CD4-positive, alpha-beta T cell (primary cell): ENCODE measurements at regions of chr10 and their contacts with region 1.

Region 1: GRCh38 chr10:62996925-62997324 is 136.2 kb upstream of the NRBF2 start:
- DNase-seq: no peak
- ATAC-seq: no peak
- H3K4me3 ChIP-seq: no peak overlapping the region
- H3K4me3 Mint-ChIP-seq: no peak overlapping the region
- H3K27ac ChIP-seq: no peak overlapping the region
- H3K27ac Mint-ChIP-seq: no peak overlapping the region
- H3K4me1 ChIP-seq: no peaks in the 10 kb centered on the region
- H3K4me1 Mint-ChIP-seq: peaks cover 5% of the 10 kb centered on the region
- H3K27me3 ChIP-seq: peaks cover 0 to 3% of the 10 kb centered on the region in 2 experiments
- H3K27me3 Mint-ChIP-seq: peaks cover 29% of the 10 kb centered on the region
- CTCF ChIP-seq: no peak

Region 2: GRCh38 chr10:62577666-62578291 is 419.1 kb before region 1 on chr10:
- CTCF ChIA-PET with region 1: no interaction called
- POLR2A ChIA-PET with region 1: no interaction called
- intact Hi-C with region 1: loop called in 1 of 2 experiments (anchors 5 kb)
- DNase-seq: no peak
- ATAC-seq: no peak
- H3K4me3 ChIP-seq: no peak overlapping the region
- H3K4me3 Mint-ChIP-seq: no peak overlapping the region
- H3K27ac ChIP-seq: no peak overlapping the region
- H3K27ac Mint-ChIP-seq: no peak overlapping the region
- H3K4me1 ChIP-seq: no peaks in the 10 kb centered on the region
- H3K4me1 Mint-ChIP-seq: no peaks in the 10 kb centered on the region
- H3K27me3 ChIP-seq: no peaks in the 10 kb centered on the region
- H3K27me3 Mint-ChIP-seq: peaks cover 5% of the 10 kb centered on the region
- CTCF ChIP-seq: no peak

Region 3: GRCh38 chr10:62980687-62981086 is 16.2 kb before region 1 on chr10:
- CTCF ChIA-PET with region 1: no interaction called
- POLR2A ChIA-PET with region 1: no interaction called
- intact Hi-C with region 1: no loop called
- DNase-seq: no peak
- ATAC-seq: no peak
- H3K4me3 ChIP-seq: no peak overlapping the region
- H3K4me3 Mint-ChIP-seq: no peak overlapping the region
- H3K27ac ChIP-seq: no peak overlapping the region
- H3K27ac Mint-ChIP-seq: no peak overlapping the region
- H3K4me1 ChIP-seq: no peaks in the 10 kb centered on the region
- H3K4me1 Mint-ChIP-seq: no peaks in the 10 kb centered on the region
- H3K27me3 ChIP-seq: peaks cover 0 to 2% of the 10 kb centered on the region in 2 experiments
- H3K27me3 Mint-ChIP-seq: peaks cover 5% of the 10 kb centered on the region
- CTCF ChIP-seq: no peak